Transverse colon (tissue), 4 donors: ENCODE measurements at regions of chr16 and their contacts with region 1.

Region 1: DNA sequence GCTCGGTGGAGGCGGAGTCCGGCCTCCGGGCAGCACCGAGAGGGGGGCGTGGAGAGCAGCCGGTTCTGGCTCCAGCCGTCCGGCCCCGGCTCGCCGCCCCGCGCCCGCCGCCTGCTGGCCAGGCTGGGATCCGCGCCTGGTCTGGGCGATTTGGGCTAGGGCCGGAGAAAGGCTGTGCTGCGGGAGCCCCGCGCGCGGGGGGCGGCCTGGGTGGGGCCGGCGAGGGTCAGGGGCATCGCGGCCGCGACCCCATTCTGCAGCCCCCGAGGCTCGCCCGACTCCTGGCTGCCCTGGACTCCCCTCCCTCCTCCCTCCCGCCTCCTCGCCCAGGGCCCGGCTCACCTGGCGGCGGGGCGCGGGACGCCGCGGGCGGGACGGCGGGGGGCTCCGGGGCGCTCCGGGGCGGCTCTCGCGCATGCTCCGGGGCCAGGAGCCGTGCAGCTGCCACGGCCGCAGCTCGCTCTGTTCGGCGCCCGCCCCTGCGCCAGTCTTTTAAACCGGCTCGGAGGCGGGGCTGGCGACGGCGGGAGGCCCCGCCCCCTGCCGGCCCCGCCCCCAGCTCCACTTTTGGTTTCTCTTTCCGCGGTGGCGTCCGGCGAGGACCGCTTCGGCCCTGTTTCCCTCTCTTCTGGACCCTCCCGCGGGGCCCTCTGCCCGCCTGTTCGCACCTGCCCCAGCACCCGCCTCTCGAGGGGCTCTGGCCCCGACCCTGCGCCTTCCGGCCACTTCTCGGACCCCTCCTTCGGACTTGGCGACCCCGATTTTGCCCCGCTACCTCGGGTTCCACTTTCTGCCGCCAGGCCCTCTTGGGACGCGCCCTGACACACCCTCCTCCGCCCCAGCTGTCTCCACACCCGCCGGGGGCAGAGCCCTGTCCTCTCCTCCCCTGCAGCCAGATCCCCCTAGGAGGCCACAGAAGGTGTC is at the start of gene SOCS1:
- DNase-seq: peak; percentile 88
- H3K4me3 ChIP-seq: peak within 1 kb of the TSS; percentile 74 to 96 (median 81)
- H3K27ac ChIP-seq: peak within 1 kb of the TSS; percentile 96 to 99 (median 98)
- H3K4me1 ChIP-seq: peaks cover 16 to 44% (median 35%) of the 10 kb centered on the region in 4 donors
- H3K27me3 ChIP-seq: no peaks in the 10 kb centered on the region
- CTCF ChIP-seq: peak; percentile 72 to 96 (median 90)
- EP300 ChIP-seq: no peak
- POLR2A ChIP-seq: peak; percentile 79
- total RNA-seq, gene SOCS1: 2.2 to 17.6 (median 10.8) TPM

Region 2: GRCh38 chr16:10964039-10964890 is 291.7 kb before region 1 on chr16:
- in situ Hi-C with region 1: loop called (anchors 5 to 10 kb)
- intact Hi-C with region 1: no loop called
- DNase-seq: peak; percentile 86
- H3K4me3 ChIP-seq: no peak overlapping the region
- H3K27ac ChIP-seq: peak overlapping the region in 3 of 4 donors; percentile 8 to 56 (median 55)
- H3K4me1 ChIP-seq: peaks cover 0 to 11% (median 5%) of the 10 kb centered on the region in 4 donors
- H3K27me3 ChIP-seq: no peaks in the 10 kb centered on the region
- CTCF ChIP-seq: peak; percentile 90 to 96 (median 95)
- EP300 ChIP-seq: no peak
- POLR2A ChIP-seq: no peak

Region 3: DNA sequence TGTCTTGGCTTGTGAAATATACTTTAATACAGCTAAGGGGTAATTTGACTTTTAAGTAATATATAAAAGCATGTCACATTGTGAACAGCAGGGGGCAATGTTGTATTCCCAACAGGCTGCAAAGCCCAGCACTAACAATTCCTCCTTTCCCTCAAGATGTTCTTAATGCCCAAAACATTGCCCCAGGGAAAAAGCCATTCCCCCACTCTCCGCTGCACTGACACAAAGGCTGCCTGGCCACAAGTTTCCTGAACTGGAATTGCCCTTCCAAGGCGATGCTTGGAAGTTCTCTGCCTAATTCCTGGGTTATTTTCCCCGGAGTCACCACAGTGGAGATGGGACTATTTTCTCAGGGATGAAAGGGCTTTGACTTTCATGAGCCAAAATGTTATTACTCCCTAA is 284.4 kb before region 1 on chr16:
- in situ Hi-C with region 1: loop called (anchors 5 to 10 kb)
- intact Hi-C with region 1: loop called (anchors 1 kb)
- DNase-seq: peak; percentile 31
- H3K4me3 ChIP-seq: no peak overlapping the region
- H3K27ac ChIP-seq: no peak overlapping the region
- H3K4me1 ChIP-seq: peaks cover 0 to 4% (median 0%) of the 10 kb centered on the region in 4 donors
- H3K27me3 ChIP-seq: no peaks in the 10 kb centered on the region
- CTCF ChIP-seq: peak; percentile 76 to 89 (median 79)
- EP300 ChIP-seq: no peak
- POLR2A ChIP-seq: no peak

Region 4: GRCh38 chr16:11076259-11077018 is 179.6 kb before region 1 on chr16:
- in situ Hi-C with region 1: no loop called
- intact Hi-C with region 1: loop called (anchors 10 kb)
- DNase-seq: no peak
- H3K4me3 ChIP-seq: no peak overlapping the region
- H3K27ac ChIP-seq: peak overlapping the region; percentile 71 to 79 (median 76)
- H3K4me1 ChIP-seq: peaks cover 32 to 46% (median 39%) of the 10 kb centered on the region in 4 donors
- H3K27me3 ChIP-seq: no peaks in the 10 kb centered on the region
- CTCF ChIP-seq: no peak
- EP300 ChIP-seq: no peak
- POLR2A ChIP-seq: no peak

Region 5: DNA sequence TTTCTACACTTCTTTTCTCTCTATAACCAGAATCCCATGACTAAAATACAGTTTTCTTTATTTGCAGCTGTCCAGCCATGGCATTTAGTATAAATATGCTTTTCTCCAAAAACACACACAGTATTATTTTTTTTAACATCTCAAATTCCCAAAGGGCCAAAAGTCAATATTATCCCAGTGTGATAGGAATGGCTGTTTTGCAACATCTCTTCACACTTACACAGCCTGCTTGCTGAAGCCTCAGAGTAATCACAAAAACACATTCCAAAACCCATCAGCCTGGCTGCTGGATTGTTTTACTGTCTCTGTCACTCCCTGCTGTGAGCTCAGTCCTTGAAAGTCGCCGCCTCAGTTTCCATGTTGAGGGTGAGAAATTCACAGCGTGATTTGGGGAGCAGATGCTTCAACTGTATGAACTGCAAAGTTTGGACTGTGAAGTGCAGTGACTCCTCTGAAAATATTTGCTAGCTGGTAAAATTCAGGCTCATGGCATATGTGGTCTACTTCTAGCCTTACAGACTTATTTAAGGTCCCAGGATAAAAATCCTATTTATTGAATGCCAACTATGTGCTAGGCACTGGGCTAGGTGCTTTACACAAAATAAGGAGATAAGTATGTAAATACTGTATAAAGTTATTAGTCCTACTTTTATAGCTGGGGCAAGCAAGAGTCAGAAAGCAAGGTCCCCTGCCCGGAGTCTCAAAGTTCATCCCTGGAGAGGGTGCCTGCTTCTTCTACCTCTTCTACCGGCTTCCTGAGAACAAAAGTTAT is 116.5 kb before region 1 on chr16:
- in situ Hi-C with region 1: no loop called
- intact Hi-C with region 1: loop called (anchors 10 kb)
- DNase-seq: no peak
- H3K4me3 ChIP-seq: no peak overlapping the region
- H3K27ac ChIP-seq: no peak overlapping the region
- H3K4me1 ChIP-seq: peaks cover 0 to 5% (median 4%) of the 10 kb centered on the region in 4 donors
- H3K27me3 ChIP-seq: no peaks in the 10 kb centered on the region
- CTCF ChIP-seq: no peak
- EP300 ChIP-seq: no peak
- POLR2A ChIP-seq: no peak

Region 6: GRCh38 chr16:11356573-11357331 is 100.8 kb after region 1 on chr16:
- in situ Hi-C with region 1: loop called in 2 of 4 experiments (anchors 25 kb)
- intact Hi-C with region 1: loop called (anchors 10 kb)
- DNase-seq: peak; percentile 81
- H3K4me3 ChIP-seq: no peak overlapping the region
- H3K27ac ChIP-seq: no peak overlapping the region
- H3K4me1 ChIP-seq: peaks cover 0 to 10% (median 5%) of the 10 kb centered on the region in 4 donors
- H3K27me3 ChIP-seq: no peaks in the 10 kb centered on the region
- CTCF ChIP-seq: peak; percentile 59 to 69 (median 61)
- EP300 ChIP-seq: no peak
- POLR2A ChIP-seq: no peak